ENCODE measurements at regions of chr6 and their contacts with region 1.

Region 1: GRCh38 chr6:7276199-7276524 is 36.8 kb downstream of the SSR1 start:
- DNase-seq: no peak
- H3K4me3 Mint-ChIP-seq: no peak overlapping the region
- H3K27ac Mint-ChIP-seq: no peak overlapping the region
- H3K4me1 Mint-ChIP-seq: no peaks in the 10 kb centered on the region
- H3K27me3 Mint-ChIP-seq: no peaks in the 10 kb centered on the region

Region 2: DNA sequence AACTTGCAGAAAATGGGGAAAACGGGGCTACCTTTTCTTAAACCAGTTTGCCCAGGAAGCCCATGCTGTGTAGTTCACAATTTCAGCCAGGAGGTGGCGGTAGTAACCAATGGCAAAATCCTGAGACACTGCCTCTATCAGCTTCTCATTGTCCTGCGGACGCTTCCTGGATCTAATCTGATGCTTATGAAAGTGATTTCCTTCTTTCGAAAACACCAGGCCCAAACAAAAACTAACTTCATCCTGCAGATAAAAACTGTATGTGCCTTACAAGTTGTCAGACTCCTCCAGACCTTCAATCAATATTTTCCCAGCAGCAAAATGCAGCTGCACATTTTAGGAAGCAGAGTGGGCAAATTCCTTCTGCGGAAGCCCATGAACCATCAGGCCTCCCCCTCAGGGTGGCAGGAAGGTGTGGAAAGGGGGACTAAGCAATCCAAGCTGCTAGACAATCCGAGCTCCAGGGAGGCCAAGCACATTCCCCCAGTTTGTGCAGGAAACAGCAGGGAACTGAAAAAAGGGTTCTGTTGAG is 599.2 kb before region 1 on chr6:
- intact Hi-C with region 1: loop called (anchors 1 kb)
- DNase-seq: peak; percentile 75
- H3K4me3 Mint-ChIP-seq: no peak overlapping the region
- H3K27ac Mint-ChIP-seq: no peak overlapping the region
- H3K4me1 Mint-ChIP-seq: peaks cover 15% of the 10 kb centered on the region
- H3K27me3 Mint-ChIP-seq: peaks cover 1% of the 10 kb centered on the region

Region 3: DNA sequence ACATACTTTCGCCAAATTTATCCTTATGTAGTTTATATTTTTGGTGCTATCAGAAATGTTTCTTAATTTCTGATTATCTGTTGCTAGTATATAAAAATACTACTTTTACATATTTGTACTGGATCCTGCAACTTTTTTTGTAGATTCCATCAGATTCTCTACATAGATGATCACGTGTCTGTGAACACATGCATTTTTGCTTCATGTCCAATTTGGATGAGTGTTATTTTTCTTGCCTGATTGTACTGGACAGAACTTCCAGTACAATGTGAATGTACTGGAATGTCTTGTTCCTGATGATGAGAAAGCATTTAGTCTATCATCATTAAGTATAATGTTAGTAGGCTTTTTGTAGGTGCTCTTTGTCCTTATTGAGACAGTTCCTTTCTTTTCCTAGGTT is 61.9 kb after region 1 on chr6:
- intact Hi-C with region 1: loop called (anchors 2 kb)
- DNase-seq: no peak
- H3K4me3 Mint-ChIP-seq: no peak overlapping the region
- H3K27ac Mint-ChIP-seq: no peak overlapping the region
- H3K4me1 Mint-ChIP-seq: peaks cover 3% of the 10 kb centered on the region
- H3K27me3 Mint-ChIP-seq: peaks cover 34% of the 10 kb centered on the region

Region 4: DNA sequence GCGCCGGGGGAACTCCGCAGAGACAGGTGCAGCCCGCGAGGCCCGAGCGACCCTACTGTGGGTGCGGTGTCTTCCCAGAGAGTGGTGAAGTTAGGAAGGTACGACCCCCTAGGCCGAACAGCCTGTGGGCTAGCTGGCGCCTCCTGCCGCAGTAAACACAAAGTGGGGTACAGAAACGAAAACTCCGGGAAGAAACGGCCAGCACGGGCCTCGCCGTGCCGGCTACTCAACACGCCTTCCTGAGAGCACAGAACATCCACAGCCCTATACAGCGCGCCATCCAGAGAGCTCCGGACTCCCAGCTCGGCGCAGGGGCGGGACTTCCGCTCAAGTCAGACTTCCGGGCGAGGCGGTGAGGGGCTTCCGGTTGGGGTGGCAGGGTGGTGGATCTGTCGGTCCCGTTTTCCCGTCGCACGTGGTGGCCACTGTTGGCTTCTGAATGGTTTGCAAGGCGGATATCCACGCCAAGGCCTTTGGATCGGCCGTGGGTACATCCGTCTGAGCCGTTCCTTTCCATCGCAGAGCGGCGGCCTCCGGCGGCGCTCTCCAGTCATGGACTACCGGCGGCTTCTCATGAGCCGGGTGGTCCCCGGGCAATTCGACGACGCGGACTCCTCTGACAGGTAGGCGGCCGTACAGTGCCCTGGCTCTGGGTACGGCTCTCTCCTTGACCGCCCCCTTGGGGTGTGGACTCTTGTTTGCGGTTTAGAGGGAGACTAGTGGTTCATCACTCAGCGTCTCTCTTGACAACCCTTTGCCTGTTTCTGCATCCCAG is 113.5 kb after region 1 on chr6 and contains the starts of genes CAGE1 and RIOK1:
- intact Hi-C with region 1: loop called (anchors 1 kb)
- DNase-seq: peak; percentile 93
- H3K4me3 Mint-ChIP-seq: peak within 1 kb of the TSS; percentile 92
- H3K27ac Mint-ChIP-seq: peak within 1 kb of the TSS; percentile 99
- H3K4me1 Mint-ChIP-seq: peaks cover 27% of the 10 kb centered on the region
- H3K27me3 Mint-ChIP-seq: no peaks in the 10 kb centered on the region
- total RNA-seq, gene CAGE1: 0.16 TPM in 2 replicates
- total RNA-seq, gene RIOK1: 44.4 and 53.3 TPM in 2 replicates

Region 5: GRCh38 chr6:7615611-7616383 is 339.6 kb after region 1 on chr6:
- intact Hi-C with region 1: loop called (anchors 1 kb)
- DNase-seq: no peak
- H3K4me3 Mint-ChIP-seq: no peak overlapping the region
- H3K27ac Mint-ChIP-seq: no peak overlapping the region
- H3K4me1 Mint-ChIP-seq: peaks cover 17% of the 10 kb centered on the region
- H3K27me3 Mint-ChIP-seq: no peaks in the 10 kb centered on the region

Measured in activated T-helper 2 cell treated with anti-CD3 and anti-CD28 coated beads, Interferon-gamma antibody, Interleukin-2, Interleukin-4, amounts not matched to agents 10 μg/mL and 5 μg/mL and 100 μg/mL, durations not matched to agents 14 hours and 24 hours and 36 hours (primary cell).